Astrocyte of the cerebellum (primary cell): ENCODE measurements at regions of chr20 and their contacts with region 1.

Region 1: GRCh38 chr20:13105864-13106457 is 97.2 kb downstream of the SPTLC3 start:
- DNase-seq: peak; percentile 22
- H3K4me3 ChIP-seq: no peak overlapping the region
- CTCF ChIP-seq: peak; percentile 50

Region 2: DNA sequence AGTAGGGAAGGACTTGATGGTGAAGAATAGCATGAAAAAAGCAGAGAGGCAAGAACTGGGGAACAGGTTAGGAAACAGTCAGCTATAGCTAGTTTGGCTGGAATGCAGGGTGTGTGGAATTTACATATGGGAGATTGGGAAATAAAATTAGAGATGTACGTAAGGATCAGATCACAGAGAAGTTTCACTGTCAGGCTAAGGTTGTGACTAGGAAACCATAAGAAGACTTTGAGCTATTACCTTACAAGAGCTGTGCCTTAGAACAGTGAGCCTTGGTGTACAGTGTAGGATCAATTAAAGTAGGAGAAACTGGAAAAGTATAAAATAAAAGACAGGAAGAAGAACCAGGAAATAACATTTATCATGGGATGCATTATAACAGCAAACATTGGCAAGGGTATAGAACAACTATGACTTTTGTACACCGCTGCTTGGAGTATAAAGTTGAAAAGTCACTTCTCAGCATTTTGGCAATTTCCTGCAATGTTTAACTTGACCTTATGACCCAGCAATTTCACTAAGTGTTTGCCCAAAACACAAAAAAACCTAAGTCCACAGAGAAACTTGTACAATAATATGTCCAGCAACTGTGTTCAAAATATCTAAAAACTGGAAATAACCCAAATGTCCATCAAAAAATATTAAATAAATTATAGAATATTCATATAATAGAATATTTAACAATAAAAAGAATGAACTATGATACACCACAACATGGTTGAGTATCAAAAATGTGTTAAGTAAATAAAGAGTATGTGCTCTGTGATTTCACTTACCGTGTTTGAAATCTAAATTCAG is 128.4 kb before region 1 on chr20:
- in situ Hi-C with region 1: loop called (anchors 5 kb)
- DNase-seq: no peak
- H3K4me3 ChIP-seq: no peak overlapping the region
- CTCF ChIP-seq: no peak